WTC11 (cell line): ENCODE measurements at regions of chr14 and their contacts with region 1.

Region 1: DNA sequence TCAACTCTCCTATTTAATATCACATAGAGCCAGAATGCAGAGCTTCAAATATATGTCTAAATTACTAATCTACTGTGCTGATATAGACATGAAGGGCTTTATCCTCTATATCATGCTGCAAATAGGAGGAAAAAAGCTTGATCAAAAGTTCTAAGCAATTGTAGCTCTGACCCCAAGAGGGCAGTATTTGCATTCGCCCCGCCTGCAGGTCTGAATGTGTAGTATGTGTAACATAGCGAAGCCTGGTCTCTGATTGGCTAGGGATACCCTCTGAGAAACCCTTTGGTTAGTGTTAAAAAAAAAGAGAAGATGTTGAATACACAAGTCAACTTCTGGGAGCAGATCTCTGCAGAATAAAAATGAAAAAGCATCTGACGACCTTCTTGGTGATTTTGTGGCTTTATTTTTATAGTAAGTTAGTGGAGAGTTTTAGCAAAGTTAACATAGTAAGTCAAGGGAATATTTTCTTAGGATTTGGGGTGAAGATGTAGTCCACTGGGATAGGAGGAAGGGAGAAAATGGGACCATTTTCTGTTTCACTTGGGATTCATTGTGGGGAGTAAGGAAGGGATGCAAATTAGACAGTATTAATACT is 151.6 kb upstream of the OR4E1 start:
- DNase-seq: peak; percentile 63
- ATAC-seq: peak; percentile 99
- H3K4me3 Mint-ChIP-seq: no peak overlapping the region
- H3K27ac Mint-ChIP-seq: no peak overlapping the region
- H3K4me1 Mint-ChIP-seq: peaks cover 7% of the 10 kb centered on the region
- H3K27me3 Mint-ChIP-seq: peaks cover 11% of the 10 kb centered on the region; the same call in 1 of the 2 replicates
- CTCF ChIP-seq: peak; percentile 55; the same call in 1 of the 2 replicates

Region 2: DNA sequence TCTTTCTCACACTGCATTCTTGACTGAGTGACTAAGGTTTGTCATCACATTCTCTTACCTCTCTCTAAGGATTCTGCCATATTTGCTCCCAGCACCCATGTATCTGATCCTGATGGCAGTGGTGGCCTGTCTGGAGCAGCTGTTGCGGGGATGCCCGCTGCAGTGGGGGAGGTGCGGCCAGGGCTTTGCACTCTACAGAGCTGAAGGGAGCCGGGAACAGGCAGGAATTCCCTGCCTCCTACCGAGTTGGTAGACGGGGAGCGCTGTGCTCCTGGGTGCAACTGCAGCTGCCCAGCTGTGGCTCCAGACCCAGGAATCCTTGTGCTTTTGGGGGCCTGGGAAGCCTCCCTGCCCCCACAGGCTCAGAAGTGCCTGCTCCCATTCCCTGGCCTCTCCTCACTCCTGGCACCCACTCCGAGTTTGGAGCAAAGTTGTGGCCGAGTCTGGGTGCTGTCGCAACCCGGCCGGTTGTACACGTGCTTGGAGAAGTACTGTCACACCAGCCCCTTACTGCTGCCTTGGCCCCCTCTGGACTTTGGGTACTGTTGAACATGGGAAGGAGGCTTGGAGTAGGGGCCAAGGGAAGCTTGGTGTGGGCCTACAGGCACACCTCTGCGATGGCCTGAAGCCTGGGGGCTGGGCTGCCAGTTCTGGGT is 44.7 kb before region 1 on chr14:
- CTCF ChIA-PET with region 1: interaction called, 10 read pairs
- POLR2A ChIA-PET with region 1: no interaction called
- DNase-seq: no peak
- ATAC-seq: no peak; the same call in 1 of the 2 replicates
- H3K4me3 Mint-ChIP-seq: no peak overlapping the region
- H3K27ac Mint-ChIP-seq: no peak overlapping the region
- H3K4me1 Mint-ChIP-seq: peaks cover 27% of the 10 kb centered on the region
- H3K27me3 Mint-ChIP-seq: 0 out of 2 replicates have a peak, but pooled peaks cover 9% of the 10 kb centered on the region
- CTCF ChIP-seq: no peak

Region 3: DNA sequence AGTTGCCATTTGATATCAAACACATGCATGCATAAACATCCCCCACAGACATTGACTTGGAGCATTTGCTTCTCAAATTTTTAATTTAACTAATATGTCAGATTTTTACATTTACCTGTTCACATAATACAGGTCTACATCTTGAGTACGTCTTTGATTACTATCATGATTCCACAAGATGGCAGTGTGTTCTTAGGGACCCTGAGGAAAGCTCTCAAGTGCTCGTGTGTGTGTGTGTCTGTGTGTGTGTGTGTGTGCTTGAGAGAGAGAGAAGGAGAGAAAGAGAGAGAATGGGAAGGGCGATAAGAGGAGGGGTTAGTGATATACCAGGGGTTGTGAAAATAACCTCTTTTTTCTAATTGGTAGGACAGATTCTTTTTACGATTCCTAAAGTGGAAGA is 15.5 kb after region 1 on chr14:
- CTCF ChIA-PET with region 1: interaction called, 29 read pairs
- POLR2A ChIA-PET with region 1: no interaction called
- DNase-seq: no peak
- ATAC-seq: peak; percentile 65
- H3K4me3 Mint-ChIP-seq: no peak overlapping the region
- H3K27ac Mint-ChIP-seq: no peak overlapping the region
- H3K4me1 Mint-ChIP-seq: no peaks in the 10 kb centered on the region
- H3K27me3 Mint-ChIP-seq: peaks cover 32% of the 10 kb centered on the region
- CTCF ChIP-seq: no peak

Region 4: DNA sequence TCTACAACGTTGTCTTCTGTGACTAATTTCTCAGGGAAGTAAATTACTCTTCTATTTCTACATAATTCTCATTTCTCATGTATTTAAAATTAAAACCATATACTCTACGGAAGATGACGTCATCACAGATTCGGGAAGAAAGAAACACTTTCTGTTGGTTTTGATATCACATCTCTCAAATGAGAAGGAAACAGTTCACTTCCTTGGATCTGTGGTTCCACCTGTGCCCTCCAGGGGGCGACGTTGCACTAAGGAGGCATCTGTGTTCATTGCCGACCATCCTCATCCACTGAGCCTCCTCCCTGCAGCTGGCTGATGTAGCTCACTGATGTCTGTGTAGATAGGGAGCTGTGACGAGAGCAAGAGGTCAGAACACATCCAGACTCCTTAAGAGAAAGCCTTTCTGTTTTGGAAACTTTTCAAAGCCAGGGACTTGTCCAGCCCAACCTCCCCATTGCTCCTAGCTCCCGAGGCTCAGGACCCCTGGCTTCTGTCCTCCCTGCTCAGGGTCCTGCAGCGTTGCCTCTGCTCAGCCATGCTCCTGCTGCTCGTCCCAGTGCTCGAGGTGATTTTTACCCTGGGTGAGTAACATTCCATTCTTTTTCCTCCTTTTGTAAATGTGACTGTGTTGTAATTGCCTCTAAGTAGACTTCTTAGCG is 21.1 kb after region 1 on chr14:
- CTCF ChIA-PET with region 1: interaction called, 22 read pairs
- POLR2A ChIA-PET with region 1: no interaction called
- DNase-seq: peak; percentile 81
- ATAC-seq: peak; percentile 97
- H3K4me3 Mint-ChIP-seq: no peak overlapping the region
- H3K27ac Mint-ChIP-seq: no peak overlapping the region
- H3K4me1 Mint-ChIP-seq: no peaks in the 10 kb centered on the region; the same call in 1 of the 2 replicates
- H3K27me3 Mint-ChIP-seq: peaks cover 30% of the 10 kb centered on the region
- CTCF ChIP-seq: peak; percentile 81

Region 5: GRCh38 chr14:21852061-21852664 is 26.9 kb after region 1 on chr14:
- CTCF ChIA-PET with region 1: interaction called, 22 read pairs
- POLR2A ChIA-PET with region 1: no interaction called
- DNase-seq: peak; percentile 77
- ATAC-seq: peak; percentile 83
- H3K4me3 Mint-ChIP-seq: no peak overlapping the region
- H3K27ac Mint-ChIP-seq: no peak overlapping the region
- H3K4me1 Mint-ChIP-seq: no peaks in the 10 kb centered on the region
- H3K27me3 Mint-ChIP-seq: peaks cover 20% of the 10 kb centered on the region
- CTCF ChIP-seq: peak; percentile 30